Caco-2 (cell line): ENCODE measurements at regions of chr10 and their contacts with region 1.

Region 1: DNA sequence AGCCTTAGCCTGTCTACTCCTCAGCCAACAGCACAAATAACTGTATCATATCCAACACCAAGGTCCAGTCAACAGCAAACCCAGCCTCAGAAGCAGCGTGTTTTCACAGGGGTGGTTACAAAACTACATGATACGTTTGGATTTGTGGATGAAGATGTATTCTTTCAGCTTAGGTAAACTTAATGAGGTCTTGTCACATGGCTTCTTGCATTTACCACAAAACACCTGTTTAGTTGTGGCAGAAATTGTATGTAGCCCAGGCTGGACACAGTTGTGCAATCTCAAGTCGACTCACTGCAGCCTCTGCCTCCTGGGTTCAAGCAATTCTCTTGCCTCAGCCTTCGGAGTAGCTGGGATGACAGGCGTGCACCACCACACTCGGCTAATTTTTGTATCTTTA is 21.4 kb downstream of the CCAR1 start:
- DNase-seq: no peak
- H3K4me3 ChIP-seq: no peak overlapping the region
- H3K4me3 Mint-ChIP-seq: no peak overlapping the region
- H3K27ac Mint-ChIP-seq: no peak overlapping the region
- H3K4me1 ChIP-seq: no peaks in the 10 kb centered on the region
- H3K4me1 Mint-ChIP-seq: no peaks in the 10 kb centered on the region
- H3K27me3 ChIP-seq: no peaks in the 10 kb centered on the region
- H3K27me3 Mint-ChIP-seq: no peaks in the 10 kb centered on the region
- CTCF ChIP-seq: no peak

Region 2: GRCh38 chr10:67864607-67865371 is 877.6 kb before region 1 on chr10:
- CTCF ChIA-PET with region 1: no interaction called
- POLR2A ChIA-PET with region 1: no interaction called
- intact Hi-C with region 1: no loop called
- DNase-seq: no peak
- H3K4me3 ChIP-seq: no peak overlapping the region
- H3K4me3 Mint-ChIP-seq: no peak overlapping the region
- H3K27ac Mint-ChIP-seq: no peak overlapping the region
- H3K4me1 ChIP-seq: 0 out of 2 replicates have a peak, but pooled peaks cover 3% of the 10 kb centered on the region
- H3K4me1 Mint-ChIP-seq: peaks cover 5% of the 10 kb centered on the region
- H3K27me3 ChIP-seq: no peaks in the 10 kb centered on the region
- H3K27me3 Mint-ChIP-seq: no peaks in the 10 kb centered on the region
- CTCF ChIP-seq: no peak

Region 3: GRCh38 chr10:68550747-68551411 is 191.5 kb before region 1 on chr10:
- CTCF ChIA-PET with region 1: no interaction called
- POLR2A ChIA-PET with region 1: no interaction called
- intact Hi-C with region 1: loop called (anchors 5 kb)
- DNase-seq: peak; percentile 84
- H3K4me3 ChIP-seq: no peak overlapping the region
- H3K4me3 Mint-ChIP-seq: no peak overlapping the region
- H3K27ac Mint-ChIP-seq: no peak overlapping the region
- H3K4me1 ChIP-seq: peaks cover 18% of the 10 kb centered on the region; the same call in 1 of the 2 replicates
- H3K4me1 Mint-ChIP-seq: peaks cover 14% of the 10 kb centered on the region
- H3K27me3 ChIP-seq: no peaks in the 10 kb centered on the region
- H3K27me3 Mint-ChIP-seq: no peaks in the 10 kb centered on the region
- CTCF ChIP-seq: peak; percentile 92 to 97